Sigmoid colon (tissue), 7 donors: ENCODE measurements at regions of chr3 and their contacts with region 1.

Region 1: GRCh38 chr3:58008140-58009025 is at the start of gene FLNB:
- DNase-seq: peak; percentile 88
- H3K4me3 ChIP-seq: peak within 1 kb of the TSS; percentile 68 to 94 (median 84)
- H3K27ac ChIP-seq: peak within 1 kb of the TSS; percentile 86 to 93 (median 88)
- H3K4me1 ChIP-seq: peaks cover 0 to 42% (median 35%) of the 10 kb centered on the region in 4 donors
- H3K27me3 ChIP-seq: no peaks in the 10 kb centered on the region
- CTCF ChIP-seq: peak; percentile 71 to 86 (median 78)
- EP300 ChIP-seq: no peak
- POLR2A ChIP-seq: peak; percentile 56 to 71
- total RNA-seq, gene FLNB: 51.7 to 121 (median 76.7) TPM

Region 2: DNA sequence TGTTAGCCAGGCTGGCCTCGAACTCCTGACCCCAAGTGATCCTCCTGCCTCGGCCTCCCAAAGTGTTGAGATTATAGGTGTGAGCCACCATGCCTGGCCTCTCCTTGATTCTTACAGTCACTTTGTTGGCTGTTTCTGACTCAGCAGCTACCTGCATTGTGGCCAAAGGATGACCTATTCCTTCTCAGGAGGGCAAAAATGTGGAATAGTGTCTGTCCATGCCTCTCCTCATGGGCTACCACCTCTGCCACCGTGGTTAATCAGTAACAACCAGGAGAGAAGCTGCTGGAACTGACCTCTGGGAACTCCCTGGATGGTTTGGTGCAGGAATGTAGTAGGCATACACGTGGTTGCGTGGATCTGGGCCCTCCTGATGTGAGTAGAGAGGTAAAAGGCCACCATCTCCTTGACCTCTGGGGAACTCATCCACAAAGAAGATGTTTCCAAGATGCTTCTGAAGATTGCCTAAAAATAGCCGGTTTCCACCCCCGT is 63.1 kb after region 1 on chr3:
- intact Hi-C with region 1: loop called (anchors 2 kb)
- DNase-seq: no peak
- H3K4me3 ChIP-seq: no peak overlapping the region
- H3K27ac ChIP-seq: peak overlapping the region; percentile 69 to 93 (median 81)
- H3K4me1 ChIP-seq: peaks cover 0 to 93% (median 86%) of the 10 kb centered on the region in 4 donors
- H3K27me3 ChIP-seq: no peaks in the 10 kb centered on the region
- CTCF ChIP-seq: no peak
- EP300 ChIP-seq: no peak
- POLR2A ChIP-seq: no peak

Region 3: DNA sequence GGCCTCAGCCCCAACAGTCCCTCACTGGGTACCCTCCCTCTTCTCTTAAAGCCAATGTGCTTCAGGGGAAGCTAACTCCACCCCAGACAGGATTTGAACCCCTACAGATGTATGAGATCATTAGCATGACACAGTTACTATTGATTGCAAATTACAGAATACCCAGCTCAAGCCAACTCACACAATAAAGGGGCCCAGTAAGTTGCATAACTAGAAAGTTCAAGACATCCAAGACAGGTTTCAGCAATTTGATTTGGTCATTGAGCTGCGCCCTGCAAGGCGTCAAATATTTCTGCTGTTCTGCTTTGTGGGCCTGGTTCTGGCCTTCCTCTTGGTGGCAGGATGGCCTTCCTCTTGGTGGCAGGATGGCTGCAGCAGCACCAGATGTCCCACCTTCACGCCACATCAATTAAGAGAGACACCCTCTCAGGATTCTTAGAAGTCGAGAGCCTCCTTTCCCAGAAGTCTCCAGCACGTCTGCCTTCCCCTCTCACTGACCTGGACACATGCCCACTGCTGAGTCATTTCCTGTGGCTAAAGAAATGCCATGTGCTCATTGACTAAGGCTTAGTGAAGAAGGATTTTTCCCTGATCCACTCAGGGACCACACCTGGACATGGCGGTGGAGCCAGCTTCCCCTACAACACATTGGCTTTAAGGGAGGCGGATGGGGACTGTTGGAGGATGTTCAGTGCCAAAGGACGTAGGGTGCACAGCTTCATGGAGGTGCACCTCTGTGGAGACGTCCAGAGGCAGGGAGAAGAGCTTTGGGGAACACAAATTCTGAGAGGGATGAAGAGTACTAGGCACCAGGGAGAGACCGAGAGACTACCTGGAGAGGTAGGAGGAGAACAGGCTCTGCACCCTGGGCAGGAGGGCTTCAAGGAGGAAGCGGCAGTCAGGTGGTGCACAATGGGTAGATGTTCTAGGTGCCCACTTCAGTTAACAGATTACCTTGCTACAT is 153.3 kb after region 1 on chr3:
- intact Hi-C with region 1: loop called (anchors 2 kb)
- DNase-seq: peak; percentile 91
- H3K4me3 ChIP-seq: no peak overlapping the region
- H3K27ac ChIP-seq: peak overlapping the region; percentile 65 to 92 (median 82)
- H3K4me1 ChIP-seq: peaks cover 0 to 83% (median 71%) of the 10 kb centered on the region in 4 donors
- H3K27me3 ChIP-seq: no peaks in the 10 kb centered on the region
- CTCF ChIP-seq: no peak
- EP300 ChIP-seq: no peak
- POLR2A ChIP-seq: no peak

Region 4: DNA sequence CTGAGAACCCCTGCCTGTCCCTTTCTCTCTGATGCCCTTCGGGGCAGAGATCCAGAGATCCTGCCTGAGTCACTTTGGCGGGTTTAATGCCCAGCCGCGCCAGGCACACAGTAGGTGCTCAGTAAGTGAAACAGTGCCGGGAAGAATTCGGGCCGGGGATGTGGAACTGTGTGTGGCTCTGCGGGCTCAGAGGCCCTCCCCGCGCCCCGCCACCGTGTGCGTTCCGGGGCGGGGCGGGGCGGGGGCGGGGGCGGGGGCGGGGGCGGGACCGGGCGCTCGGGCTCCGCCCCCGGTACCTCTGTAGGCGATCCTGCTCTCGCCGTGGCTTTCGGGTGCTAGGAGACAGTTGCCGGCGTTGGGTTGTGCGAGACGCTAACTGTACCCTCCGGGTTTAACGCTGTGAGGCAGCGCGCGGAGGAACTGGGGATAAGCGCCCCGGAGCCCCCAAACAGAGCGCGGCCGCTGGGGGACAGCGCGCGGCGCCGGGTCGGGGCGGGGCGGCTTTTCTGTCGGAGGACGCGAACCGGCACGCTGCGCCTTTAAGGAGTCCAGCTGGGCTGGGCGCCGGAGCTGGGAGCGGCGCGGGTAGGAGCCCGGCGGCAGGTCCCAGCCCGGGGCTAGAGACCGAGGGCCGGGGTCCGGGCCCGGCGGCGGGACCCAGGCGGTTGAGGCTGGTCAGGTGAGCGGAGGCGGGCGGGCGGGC is 229.0 kb after region 1 on chr3 and contains the start of gene ABHD6:
- intact Hi-C with region 1: loop called (anchors 5 kb)
- DNase-seq: peak; percentile 89
- H3K4me3 ChIP-seq: peak within 1 kb of the TSS; percentile 64 to 96 (median 86)
- H3K27ac ChIP-seq: peak within 1 kb of the TSS; percentile 81 to 91 (median 88)
- H3K4me1 ChIP-seq: peaks cover 0 to 35% (median 21%) of the 10 kb centered on the region in 4 donors
- H3K27me3 ChIP-seq: no peaks in the 10 kb centered on the region
- CTCF ChIP-seq: no peak
- EP300 ChIP-seq: no peak
- POLR2A ChIP-seq: peak in 1 of 2 donors; percentile 17
- total RNA-seq, gene ABHD6: 14.7 to 47.4 (median 31.2) TPM